ENCODE measurements at regions of chr10 and their contacts with region 1.

Region 1: DNA sequence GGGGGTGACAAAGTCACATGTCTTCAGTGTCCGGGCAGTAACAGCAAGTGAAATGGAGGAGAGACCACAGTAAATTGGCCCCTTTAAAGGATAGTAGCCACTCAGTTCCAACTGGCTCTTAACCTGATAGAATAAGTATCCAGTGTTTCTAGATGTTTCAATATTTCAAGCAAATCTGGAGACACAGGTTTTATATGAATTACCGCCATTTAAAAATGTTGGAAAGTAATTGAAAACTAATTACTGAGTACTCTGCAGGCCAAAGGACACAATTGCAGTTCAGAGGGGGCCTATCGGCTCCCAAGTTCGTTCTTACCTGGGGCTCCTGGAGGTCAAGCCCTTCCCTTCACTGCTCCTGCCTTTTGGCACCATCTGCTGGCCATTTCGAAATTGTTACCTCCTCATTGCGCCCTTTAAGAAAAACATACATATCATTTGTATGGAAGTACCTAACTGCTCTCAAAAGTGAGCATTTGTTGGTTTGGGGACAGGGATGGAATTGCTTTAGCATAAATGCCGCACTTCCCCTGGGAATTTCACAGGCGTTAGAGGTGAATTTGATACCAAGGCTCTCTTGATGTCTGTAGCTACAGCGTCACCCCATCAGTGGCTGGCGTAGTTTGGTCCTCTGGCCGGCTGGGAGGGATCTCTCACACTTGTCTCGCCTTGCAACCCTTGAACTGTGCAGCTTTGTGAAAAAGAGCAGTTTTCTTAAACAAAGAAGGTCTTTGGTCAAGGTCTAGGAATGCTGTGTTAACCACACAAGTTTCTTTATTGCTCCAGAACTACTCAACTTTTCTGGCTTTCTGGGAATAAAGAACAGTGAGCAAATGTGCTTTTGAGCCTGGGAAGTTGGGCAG is 220.0 kb downstream of the ARHGAP21 start:
- DNase-seq: peak; percentile 54
- H3K4me3 ChIP-seq: no peak overlapping the region
- H3K27ac ChIP-seq: no peak overlapping the region
- H3K4me1 ChIP-seq: peaks cover 2% of the 10 kb centered on the region
- H3K27me3 ChIP-seq: no peaks in the 10 kb centered on the region
- CTCF ChIP-seq: peak; percentile 73

Region 2: GRCh38 chr10:24209946-24210491 is 293.7 kb before region 1 on chr10:
- CTCF ChIA-PET with region 1: no interaction called
- dilution Hi-C with region 1: no loop called
- in situ Hi-C with region 1: loop called in 1 of 2 experiments (anchors 25 kb)
- intact Hi-C with region 1: loop called (anchors 2 kb)
- DNase-seq: peak; percentile 91
- H3K4me3 ChIP-seq: peak overlapping the region; percentile 25 to 53 (median 42)
- H3K27ac ChIP-seq: peak overlapping the region; percentile 70
- H3K4me1 ChIP-seq: peaks cover 15% of the 10 kb centered on the region
- H3K27me3 ChIP-seq: no peaks in the 10 kb centered on the region
- CTCF ChIP-seq: no peak

Region 3: GRCh38 chr10:24383681-24384106 is 120.0 kb before region 1 on chr10:
- CTCF ChIA-PET with region 1: interaction called, 4 read pairs
- dilution Hi-C with region 1: no loop called
- in situ Hi-C with region 1: no loop called
- intact Hi-C with region 1: loop called (anchors 1 kb)
- DNase-seq: peak; percentile 98
- H3K4me3 ChIP-seq: peak overlapping the region; percentile 28 to 39 (median 33)
- H3K27ac ChIP-seq: peak overlapping the region; percentile 100
- H3K4me1 ChIP-seq: peaks cover 42% of the 10 kb centered on the region
- H3K27me3 ChIP-seq: no peaks in the 10 kb centered on the region
- CTCF ChIP-seq: peak; percentile 43 to 68

Region 4: GRCh38 chr10:24435374-24435773 is 68.3 kb before region 1 on chr10:
- CTCF ChIA-PET with region 1: no interaction called
- dilution Hi-C with region 1: no loop called
- in situ Hi-C with region 1: no loop called
- intact Hi-C with region 1: loop called (anchors 2 kb)
- DNase-seq: peak; percentile 80
- H3K4me3 ChIP-seq: no peak overlapping the region
- H3K27ac ChIP-seq: peak overlapping the region; percentile 59
- H3K4me1 ChIP-seq: peaks cover 25% of the 10 kb centered on the region
- H3K27me3 ChIP-seq: no peaks in the 10 kb centered on the region
- CTCF ChIP-seq: no peak

Measured in mammary epithelial cell (primary cell).